Uterus (tissue), 4 donors: ENCODE measurements at regions of chr6 and their contacts with region 1.

Region 1: GRCh38 chr6:23456396-23456795 is 669.6 kb upstream of the NRSN1 start:
- DNase-seq: no peak
- H3K4me3 ChIP-seq: no peak overlapping the region
- H3K27ac ChIP-seq: no peak overlapping the region
- H3K4me1 ChIP-seq: no peaks in the 10 kb centered on the region
- H3K27me3 ChIP-seq: no peaks in the 10 kb centered on the region
- CTCF ChIP-seq: no peak
- POLR2A ChIP-seq: no peak

Region 2: DNA sequence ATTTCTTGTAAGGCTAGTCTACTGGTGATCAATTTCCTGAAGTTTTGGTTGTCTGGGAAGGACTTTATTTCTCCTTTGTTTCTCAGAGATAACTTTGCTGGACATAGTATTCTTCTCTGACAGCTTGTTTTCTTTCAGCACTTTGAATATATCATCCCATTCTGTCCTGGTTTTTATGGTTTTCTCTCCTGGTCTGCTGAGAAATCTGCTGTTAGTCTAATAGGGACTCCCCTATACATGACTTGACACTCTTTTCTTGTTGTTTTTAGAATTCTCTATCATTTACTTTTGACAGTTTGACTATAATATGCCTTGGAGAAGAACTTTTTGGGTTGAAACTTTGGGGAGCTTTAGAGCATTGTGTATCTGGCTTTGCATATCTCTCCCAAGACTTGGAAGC is 1272.0 kb before region 1 on chr6:
- intact Hi-C with region 1: loop called (anchors 5 kb)
- DNase-seq: no peak
- H3K4me3 ChIP-seq: no peak overlapping the region
- H3K27ac ChIP-seq: no peak overlapping the region
- H3K4me1 ChIP-seq: no peaks in the 10 kb centered on the region
- H3K27me3 ChIP-seq: no peaks in the 10 kb centered on the region
- CTCF ChIP-seq: no peak
- POLR2A ChIP-seq: no peak

Region 3: GRCh38 chr6:22980446-22980845 is 475.9 kb before region 1 on chr6:
- intact Hi-C with region 1: no loop called
- DNase-seq: no peak
- H3K4me3 ChIP-seq: no peak overlapping the region
- H3K27ac ChIP-seq: no peak overlapping the region
- H3K4me1 ChIP-seq: no peaks in the 10 kb centered on the region
- H3K27me3 ChIP-seq: no peaks in the 10 kb centered on the region
- CTCF ChIP-seq: no peak
- POLR2A ChIP-seq: no peak

Region 4: DNA sequence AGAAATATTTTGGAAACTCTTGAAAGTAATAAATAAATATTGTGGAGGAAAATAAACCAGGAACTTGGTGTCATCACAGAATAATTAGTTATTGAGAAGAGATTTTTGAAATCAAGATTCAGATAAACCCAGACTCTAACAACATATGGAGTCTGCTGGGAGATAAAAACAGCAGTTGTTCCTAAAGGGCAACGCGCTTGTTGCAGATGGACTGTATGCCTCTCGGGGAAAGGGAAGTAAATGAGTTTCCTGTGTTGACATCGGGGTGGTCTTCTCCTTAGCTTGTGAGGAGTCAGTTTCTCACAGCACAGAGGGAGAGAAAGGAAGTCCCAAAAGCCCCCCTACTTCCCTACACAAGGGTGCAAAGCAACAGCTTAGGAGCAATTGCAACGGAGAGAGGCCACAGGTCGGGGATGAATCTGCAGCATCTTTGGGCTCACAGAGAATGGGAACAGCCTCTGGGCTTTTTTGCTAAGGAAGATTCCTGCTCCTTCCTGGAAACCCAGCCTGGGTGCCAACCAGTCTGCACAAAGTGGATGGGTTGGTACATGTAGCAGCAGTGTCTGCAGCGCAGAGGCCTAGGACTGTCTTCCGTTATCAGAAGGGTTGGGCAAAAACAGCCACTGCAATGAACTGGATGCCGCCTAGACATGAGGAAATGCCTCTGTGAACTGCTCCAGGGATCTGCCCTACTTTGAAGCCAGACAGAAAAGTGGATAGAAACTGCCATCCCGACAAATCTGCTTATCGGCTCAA is 66.6 kb after region 1 on chr6:
- intact Hi-C with region 1: no loop called
- DNase-seq: no peak
- H3K4me3 ChIP-seq: no peak overlapping the region
- H3K27ac ChIP-seq: no peak overlapping the region
- H3K4me1 ChIP-seq: no peaks in the 10 kb centered on the region
- H3K27me3 ChIP-seq: no peaks in the 10 kb centered on the region
- CTCF ChIP-seq: no peak
- POLR2A ChIP-seq: no peak